ENCODE measurements at regions of chr11 and their contacts with region 1.

Region 1: GRCh38 chr11:45815449-45816146 is 10.6 kb downstream of the SLC35C1 start:
- DNase-seq: no peak
- H3K4me3 ChIP-seq: no peak overlapping the region
- H3K27ac ChIP-seq: no peak overlapping the region
- H3K4me1 ChIP-seq: peaks cover 5 to 7% (median 7%) of the 10 kb centered on the region in 4 experiments; a peak in 4 of 7 replicates
- H3K27me3 ChIP-seq: 0 out of 7 replicates have a peak, but pooled peaks cover 0 to 2% (median 0%) of the 10 kb centered on the region in 4 experiments
- CTCF ChIP-seq: peak in 2 of 3 experiments; percentile 11 to 13; a peak in 2 of 4 replicates
- EP300 ChIP-seq: no peak
- POLR2A ChIP-seq: no peak
- RAD21 ChIP-seq: 0 out of 4 replicates have a peak, but pooled peaks of 1 of the 2 experiments have one; percentile 15

Region 2: DNA sequence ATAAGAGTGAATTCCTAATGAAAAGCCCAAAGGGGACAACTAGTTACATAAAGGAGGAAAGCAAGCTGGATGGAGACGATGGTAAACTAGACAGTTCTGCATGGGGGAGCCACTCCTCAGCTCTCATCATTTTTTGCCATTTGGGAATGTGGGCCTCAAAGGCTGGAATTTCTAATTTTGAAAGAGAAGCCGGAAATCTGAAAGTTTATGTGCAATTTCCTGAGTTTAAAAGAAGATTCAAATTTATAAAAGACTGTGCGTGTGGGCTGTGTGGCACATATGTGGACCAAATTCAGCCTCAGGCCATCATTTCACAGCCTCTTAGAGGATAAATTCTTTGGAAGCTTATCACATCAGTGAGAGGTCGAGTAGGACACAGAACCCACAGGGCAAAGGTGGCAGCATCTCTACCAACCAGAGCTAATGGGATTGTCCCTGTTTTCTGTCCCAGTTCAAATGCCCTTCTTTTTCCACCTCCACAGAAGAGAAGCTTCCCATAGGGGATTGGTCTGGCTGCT is 13.5 kb after region 1 on chr11:
- CTCF ChIA-PET with region 1: interaction called, 12 read pairs
- POLR2A ChIA-PET with region 1: interaction called, 3 read pairs
- DNase-seq: no peak
- H3K4me3 ChIP-seq: no peak overlapping the region
- H3K27ac ChIP-seq: no peak overlapping the region
- H3K4me1 ChIP-seq: no peaks in the 10 kb centered on the region; a peak in 1 of 7 replicates
- H3K27me3 ChIP-seq: no peaks in the 10 kb centered on the region
- CTCF ChIP-seq: no peak
- EP300 ChIP-seq: no peak
- POLR2A ChIP-seq: no peak
- RAD21 ChIP-seq: no peak